Activated CD8-positive, alpha-beta T cell treated with anti-CD3 and anti-CD28 coated beads, Interleukin-2, amount 10 ng/mL, durations not matched to agents 7 days and 5 days (primary cell): ENCODE measurements at regions of chr6 and their contacts with region 1.

Region 1: DNA sequence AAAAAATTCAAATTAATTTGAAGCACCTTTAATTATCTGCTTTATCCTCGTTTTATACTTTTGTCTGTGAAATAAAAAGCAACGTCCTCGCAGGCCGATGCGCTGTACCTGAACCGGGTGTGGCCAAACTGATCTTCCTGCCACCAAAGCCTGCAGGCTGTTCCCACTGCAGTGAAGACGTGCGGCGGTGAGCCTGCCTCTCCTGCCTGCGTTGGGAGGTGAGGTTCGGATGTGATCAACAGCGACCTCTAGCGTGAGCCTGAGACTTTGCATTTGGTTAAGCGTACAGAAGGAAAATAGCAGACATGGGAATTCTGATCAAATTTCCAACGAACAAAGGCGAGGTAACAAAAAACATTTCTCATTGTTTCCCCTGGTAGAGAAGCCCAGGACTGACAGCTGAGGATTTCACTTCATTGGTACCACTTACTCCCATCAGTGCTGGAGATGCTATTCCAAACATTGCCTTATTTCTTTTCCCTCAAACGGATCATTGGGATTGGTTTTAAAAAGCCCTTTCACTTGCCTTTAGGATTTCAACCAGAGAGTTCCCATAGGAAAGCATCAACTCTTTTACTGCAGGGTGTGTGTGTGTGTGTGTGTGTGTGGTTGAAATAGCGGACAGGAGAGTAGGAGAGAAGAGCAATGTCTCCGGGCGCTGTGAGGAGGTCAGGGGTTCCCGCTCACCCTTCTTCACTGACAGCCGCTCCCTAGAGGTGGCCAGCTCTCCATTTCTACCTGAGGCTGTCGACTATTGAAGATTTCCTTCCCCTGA is 56.6 kb upstream of the CCN6 start:
- DNase-seq: peak; percentile 85
- ATAC-seq: peak; percentile 85
- H3K4me3 Mint-ChIP-seq: peak overlapping the region; percentile 60
- H3K27ac Mint-ChIP-seq: peak overlapping the region; percentile 73
- H3K4me1 Mint-ChIP-seq: peaks cover 42% of the 10 kb centered on the region
- H3K27me3 Mint-ChIP-seq: no peaks in the 10 kb centered on the region

Region 2: GRCh38 chr6:111873178-111874024 is 123.9 kb before region 1 on chr6 and contains the start of gene FYN:
- CTCF ChIA-PET with region 1: interaction called, 16 read pairs
- POLR2A ChIA-PET with region 1: interaction called, 7 read pairs
- DNase-seq: peak; percentile 99
- ATAC-seq: peak; percentile 86
- H3K4me3 Mint-ChIP-seq: peak within 1 kb of the TSS; percentile 94
- H3K27ac Mint-ChIP-seq: peak within 1 kb of the TSS; percentile 95
- H3K4me1 Mint-ChIP-seq: peaks cover 37% of the 10 kb centered on the region
- H3K27me3 Mint-ChIP-seq: no peaks in the 10 kb centered on the region
- total RNA-seq, gene FYN: 148 to 154 TPM

Region 3: DNA sequence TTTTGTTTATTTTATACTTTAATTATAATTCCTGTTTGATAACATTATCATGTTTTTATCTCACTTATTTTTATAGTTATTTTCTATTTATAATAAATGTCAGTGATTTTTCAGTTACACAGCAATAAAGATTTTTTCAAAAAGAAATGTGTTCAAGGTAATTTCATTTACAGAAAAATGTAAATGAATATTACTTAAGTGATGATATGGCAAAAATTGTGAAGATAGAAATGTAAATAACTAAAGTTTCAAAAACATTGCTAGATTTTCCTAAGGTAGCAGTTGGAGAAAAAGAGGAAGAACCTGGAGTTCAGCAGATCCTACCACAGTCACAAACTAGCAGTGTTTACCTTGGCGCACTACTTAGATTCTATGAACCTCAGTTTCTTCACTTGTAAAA is 552.5 kb after region 1 on chr6:
- CTCF ChIA-PET with region 1: no interaction called
- POLR2A ChIA-PET with region 1: no interaction called
- DNase-seq: no peak
- ATAC-seq: no peak
- H3K4me3 Mint-ChIP-seq: no peak overlapping the region
- H3K27ac Mint-ChIP-seq: no peak overlapping the region
- H3K4me1 Mint-ChIP-seq: no peaks in the 10 kb centered on the region
- H3K27me3 Mint-ChIP-seq: no peaks in the 10 kb centered on the region